Colonic mucosa (tissue), 4 donors: ENCODE measurements at regions of chr18 and their contacts with region 1.

Region 1: DNA sequence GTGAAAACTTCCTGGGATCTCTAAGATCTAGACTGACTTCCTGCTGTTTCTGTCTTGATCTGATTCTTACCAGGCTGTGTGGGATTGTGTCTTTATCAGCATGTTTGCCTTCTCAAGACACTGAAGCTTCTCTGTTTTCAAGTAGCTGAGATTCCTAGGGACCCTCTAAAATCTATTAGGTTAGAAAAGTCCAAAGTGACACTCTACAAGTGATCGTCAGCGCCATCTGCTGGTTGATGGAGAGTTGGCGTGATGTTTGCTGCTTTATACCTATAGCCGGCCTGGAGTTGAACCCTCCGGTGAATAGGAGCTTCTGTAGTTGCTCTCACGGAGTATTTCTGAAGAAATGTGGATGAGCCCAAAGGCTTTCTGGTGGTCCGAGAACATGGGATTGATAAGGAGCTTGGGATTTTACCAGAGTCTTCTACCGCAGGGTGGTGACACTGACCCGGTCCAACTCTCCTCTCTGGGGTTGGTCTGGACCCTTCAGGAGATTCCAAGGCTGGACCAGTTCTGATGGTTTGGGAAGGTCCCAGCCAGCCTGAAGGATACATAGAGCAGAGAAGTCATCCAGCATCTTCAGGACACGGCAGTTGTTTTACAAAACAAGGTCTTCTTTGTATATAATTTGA is 96.0 kb upstream of the TTC39C start:
- DNase-seq: peak; percentile 83
- H3K4me3 ChIP-seq: no peak overlapping the region
- H3K27ac ChIP-seq: no peak overlapping the region
- H3K4me1 ChIP-seq: no peaks in the 10 kb centered on the region
- H3K27me3 ChIP-seq: no peaks in the 10 kb centered on the region
- CTCF ChIP-seq: peak; percentile 92

Region 2: GRCh38 chr18:23629444-23629946 is 289.0 kb before region 1 on chr18:
- intact Hi-C with region 1: loop called (anchors 10 kb)
- DNase-seq: peak; percentile 32
- H3K4me3 ChIP-seq: no peak overlapping the region
- H3K27ac ChIP-seq: no peak overlapping the region
- H3K4me1 ChIP-seq: peaks cover 3% of the 10 kb centered on the region
- H3K27me3 ChIP-seq: no peaks in the 10 kb centered on the region
- CTCF ChIP-seq: no peak